MCF 10A (cell line): ENCODE measurements at regions of chr17 and their contacts with region 1.

Region 1: DNA sequence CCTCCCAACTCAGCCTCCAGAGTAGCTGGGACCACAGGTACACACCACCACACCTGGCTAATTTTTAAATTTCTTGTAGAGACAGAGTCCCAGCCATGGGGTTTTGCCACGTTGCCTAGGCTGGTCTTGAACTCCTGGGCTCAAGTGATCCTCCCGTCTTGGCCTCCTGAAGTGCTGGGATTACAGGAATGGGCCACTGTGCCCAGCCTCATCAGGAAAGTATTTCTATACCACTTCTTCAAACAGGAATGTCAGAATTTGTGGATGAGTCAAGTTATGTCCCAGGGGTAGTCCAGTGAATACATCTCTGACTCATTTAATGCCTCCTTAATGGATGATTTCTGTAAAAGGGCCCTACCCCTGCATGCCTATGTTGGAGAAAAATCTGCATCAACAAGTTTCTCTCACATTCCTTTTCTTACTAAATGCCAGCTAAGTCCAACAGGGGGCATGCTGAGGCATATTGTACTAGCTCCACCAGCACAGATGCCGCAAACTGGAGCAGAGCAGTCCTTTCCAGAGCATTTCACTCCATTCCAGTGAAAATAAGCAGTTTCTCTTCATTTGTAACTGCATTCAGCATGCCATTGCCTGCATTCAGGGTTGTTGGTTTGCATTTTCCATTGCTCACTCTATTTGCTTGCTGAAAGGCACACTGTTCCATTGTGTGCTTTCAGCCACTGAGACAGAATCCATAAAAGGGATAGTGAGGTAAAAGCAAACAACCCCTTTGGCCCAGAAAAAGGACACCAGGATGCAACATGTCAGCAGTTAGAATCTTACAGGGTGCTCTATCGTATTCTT is 5.3 kb upstream of the CAVIN1 start:
- DNase-seq: peak; percentile 94
- H3K4me3 Mint-ChIP-seq: no peak overlapping the region
- H3K27ac Mint-ChIP-seq: peak overlapping the region; percentile 73
- H3K4me1 Mint-ChIP-seq: peaks cover 10% of the 10 kb centered on the region
- H3K27me3 Mint-ChIP-seq: no peaks in the 10 kb centered on the region
- CTCF ChIP-seq: peak; percentile 75

Region 2: GRCh38 chr17:42459256-42459800 is 31.0 kb after region 1 on chr17:
- CTCF ChIA-PET with region 1: interaction called, 4 read pairs
- POLR2A ChIA-PET with region 1: interaction called, 36 read pairs
- intact Hi-C with region 1: loop called (anchors 1 kb)
- DNase-seq: peak; percentile 63
- H3K4me3 Mint-ChIP-seq: peak overlapping the region; percentile 92
- H3K27ac Mint-ChIP-seq: peak overlapping the region; percentile 92
- H3K4me1 Mint-ChIP-seq: peaks cover 37% of the 10 kb centered on the region
- H3K27me3 Mint-ChIP-seq: no peaks in the 10 kb centered on the region
- CTCF ChIP-seq: peak; percentile 29